Naive thymus-derived CD4-positive, alpha-beta T cell (primary cell): ENCODE measurements at regions of chr1 and their contacts with region 1.

Region 1: DNA sequence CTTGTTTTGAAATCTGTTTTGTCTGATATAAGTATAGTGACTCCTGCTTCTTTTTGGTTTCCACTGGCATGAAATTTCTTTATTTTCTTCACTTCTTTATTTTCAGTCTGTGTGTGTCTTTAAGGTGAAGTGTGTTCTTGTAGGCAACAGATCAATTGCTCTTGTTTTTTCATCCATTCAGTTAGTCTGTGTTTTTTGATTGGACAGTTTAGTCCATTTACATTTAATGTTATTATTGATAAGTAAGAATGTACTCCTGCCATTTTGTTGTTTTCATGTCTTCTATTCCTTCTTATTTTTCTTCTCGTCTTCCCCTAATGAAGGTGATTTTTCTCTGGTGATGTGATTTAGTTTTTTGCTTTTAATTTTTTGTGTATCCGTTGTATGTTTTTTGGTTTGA is 487.7 kb upstream of the PBX1 start:
- DNase-seq: no peak
- ATAC-seq: no peak
- H3K4me3 ChIP-seq: no peak overlapping the region
- H3K4me3 Mint-ChIP-seq: no peak overlapping the region
- H3K27ac ChIP-seq: no peak overlapping the region
- H3K27ac Mint-ChIP-seq: no peak overlapping the region
- H3K4me1 ChIP-seq: no peaks in the 10 kb centered on the region
- H3K4me1 Mint-ChIP-seq: no peaks in the 10 kb centered on the region
- H3K27me3 ChIP-seq: no peaks in the 10 kb centered on the region
- H3K27me3 Mint-ChIP-seq: no peaks in the 10 kb centered on the region

Region 2: GRCh38 chr1:164033782-164034181 is 37.5 kb before region 1 on chr1:
- CTCF ChIA-PET with region 1: no interaction called
- POLR2A ChIA-PET with region 1: no interaction called
- intact Hi-C with region 1: loop called in 1 of 2 experiments (anchors 1 kb)
- DNase-seq: no peak
- ATAC-seq: no peak
- H3K4me3 ChIP-seq: no peak overlapping the region
- H3K4me3 Mint-ChIP-seq: no peak overlapping the region
- H3K27ac ChIP-seq: no peak overlapping the region
- H3K27ac Mint-ChIP-seq: no peak overlapping the region
- H3K4me1 ChIP-seq: no peaks in the 10 kb centered on the region
- H3K4me1 Mint-ChIP-seq: no peaks in the 10 kb centered on the region
- H3K27me3 ChIP-seq: no peaks in the 10 kb centered on the region
- H3K27me3 Mint-ChIP-seq: no peaks in the 10 kb centered on the region

Region 3: DNA sequence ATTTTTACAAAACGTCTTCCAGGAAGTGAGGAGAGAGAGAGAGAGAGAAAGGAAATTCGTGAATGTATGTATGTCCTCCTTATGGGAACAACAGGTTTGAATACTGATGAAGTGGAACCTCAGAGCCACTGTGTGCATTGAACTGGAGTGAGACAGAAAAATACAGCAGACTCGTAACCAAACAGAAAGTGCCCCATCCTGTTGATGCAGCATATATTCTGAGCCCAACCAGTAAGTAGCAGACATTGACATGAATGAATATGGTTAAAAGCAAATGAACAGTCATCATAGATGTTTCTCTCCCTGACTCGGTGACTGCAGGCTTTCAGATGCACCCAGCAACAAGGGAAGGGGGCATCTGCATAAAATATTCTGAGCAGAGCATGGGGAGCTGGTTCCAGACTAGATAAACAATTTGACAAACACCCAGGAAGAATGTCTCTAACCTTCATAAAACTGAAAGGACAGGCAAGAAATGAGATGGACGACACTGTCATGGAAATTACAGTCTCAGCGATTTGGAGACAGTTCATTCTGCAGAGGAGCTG is 16.7 kb after region 1 on chr1:
- CTCF ChIA-PET with region 1: no interaction called
- POLR2A ChIA-PET with region 1: no interaction called
- intact Hi-C with region 1: no loop called
- DNase-seq: no peak
- ATAC-seq: no peak
- H3K4me3 ChIP-seq: no peak overlapping the region
- H3K4me3 Mint-ChIP-seq: no peak overlapping the region
- H3K27ac ChIP-seq: no peak overlapping the region
- H3K27ac Mint-ChIP-seq: no peak overlapping the region
- H3K4me1 ChIP-seq: no peaks in the 10 kb centered on the region
- H3K4me1 Mint-ChIP-seq: no peaks in the 10 kb centered on the region
- H3K27me3 ChIP-seq: no peaks in the 10 kb centered on the region
- H3K27me3 Mint-ChIP-seq: no peaks in the 10 kb centered on the region